CD4-positive, alpha-beta memory T cell (primary cell): ENCODE measurements at regions of chr10 and their contacts with region 1.

Region 1: GRCh38 chr10:45000752-45001380 is at the start of gene ZNF22:
- DNase-seq: peak; percentile 59 to 68 (median 64)
- H3K4me3 ChIP-seq: peak within 1 kb of the TSS in 1 of 2 donors; percentile 61
- H3K4me3 Mint-ChIP-seq: peak within 1 kb of the TSS; percentile 89 to 96 (median 94)
- H3K27ac ChIP-seq: peak within 1 kb of the TSS; percentile 58
- H3K27ac Mint-ChIP-seq: peak within 1 kb of the TSS; percentile 75 to 95 (median 90)
- H3K4me1 ChIP-seq: peaks cover 21% of the 10 kb centered on the region
- H3K4me1 Mint-ChIP-seq: peaks cover 20 to 48% (median 34%) of the 10 kb centered on the region in 4 donors
- H3K27me3 ChIP-seq: no peaks in the 10 kb centered on the region
- H3K27me3 Mint-ChIP-seq: no peaks in the 10 kb centered on the region
- total RNA-seq, gene ZNF22: 26.9 to 27.1 TPM

Region 2: GRCh38 chr10:44968091-44968490 is 32.8 kb before region 1 on chr10:
- CTCF ChIA-PET with region 1: no interaction called
- POLR2A ChIA-PET with region 1: no interaction called
- intact Hi-C with region 1: no loop called
- DNase-seq: no peak
- H3K4me3 ChIP-seq: no peak overlapping the region
- H3K4me3 Mint-ChIP-seq: peak overlapping the region in 2 of 8 donors; percentile 50 to 69
- H3K27ac ChIP-seq: no peak overlapping the region
- H3K27ac Mint-ChIP-seq: peak overlapping the region in 4 of 7 donors; percentile 7 to 78 (median 44)
- H3K4me1 ChIP-seq: peaks cover 25% of the 10 kb centered on the region
- H3K4me1 Mint-ChIP-seq: peaks cover 9 to 29% (median 18%) of the 10 kb centered on the region in 4 donors
- H3K27me3 ChIP-seq: no peaks in the 10 kb centered on the region
- H3K27me3 Mint-ChIP-seq: no peaks in the 10 kb centered on the region

Region 3: GRCh38 chr10:45040921-45041542 is 40.2 kb after region 1 on chr10:
- CTCF ChIA-PET with region 1: no interaction called
- POLR2A ChIA-PET with region 1: no interaction called
- intact Hi-C with region 1: loop called (anchors 1 kb)
- DNase-seq: no peak
- H3K4me3 ChIP-seq: no peak overlapping the region
- H3K4me3 Mint-ChIP-seq: no peak overlapping the region
- H3K27ac ChIP-seq: no peak overlapping the region
- H3K27ac Mint-ChIP-seq: no peak overlapping the region
- H3K4me1 ChIP-seq: no peaks in the 10 kb centered on the region
- H3K4me1 Mint-ChIP-seq: no peaks in the 10 kb centered on the region
- H3K27me3 ChIP-seq: peaks cover 4% of the 10 kb centered on the region
- H3K27me3 Mint-ChIP-seq: peaks cover 6 to 13% of the 10 kb centered on the region in 2 donors